Activated CD4-positive, alpha-beta memory T cell treated with anti-CD3 and anti-CD28 coated beads, Interleukin-2, amount 10 ng/mL, durations not matched to agents 7 days and 5 days (primary cell): ENCODE measurements at regions of chr14 and their contacts with region 1.

Region 1: DNA sequence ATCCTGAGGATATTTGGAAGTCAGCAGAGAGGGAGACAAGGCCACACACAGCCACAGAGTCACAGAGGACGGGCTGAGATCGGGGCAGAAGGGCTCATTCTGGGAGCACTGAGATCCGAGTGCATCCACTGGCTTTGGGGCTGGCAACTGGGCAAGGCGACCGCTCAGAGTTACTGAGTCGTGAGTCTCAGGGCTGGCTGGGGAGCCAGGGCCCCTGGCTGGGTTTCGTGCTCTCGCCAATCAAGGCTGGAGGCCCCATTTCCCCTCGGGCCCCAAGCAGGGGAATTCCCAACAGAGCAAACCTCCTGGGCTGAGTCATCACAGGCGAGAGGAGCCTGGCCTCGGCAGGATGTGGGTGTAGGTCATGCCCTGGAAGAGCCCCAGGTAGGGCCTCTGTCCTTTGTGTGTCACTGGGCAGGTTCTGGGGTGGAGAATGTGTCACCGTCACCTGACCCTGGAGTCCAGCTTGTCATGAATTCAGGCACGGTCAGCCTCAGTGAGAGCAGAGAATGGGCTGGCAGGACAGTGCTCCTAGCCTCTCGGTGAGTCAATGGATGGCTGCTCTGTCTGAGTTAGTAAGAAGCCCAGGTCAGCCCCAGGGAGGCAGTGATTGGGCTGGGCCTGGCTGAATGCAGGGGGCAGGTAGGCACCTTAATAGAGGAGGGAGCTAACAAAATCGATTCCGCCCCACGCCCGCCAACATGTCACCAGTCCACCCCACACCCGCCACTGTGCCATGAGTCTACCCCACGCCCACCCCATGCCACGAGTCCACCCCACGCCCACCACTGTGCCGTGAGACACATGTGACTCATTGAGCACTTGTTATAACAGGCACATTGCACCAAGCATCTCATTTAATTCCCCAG is 16.9 kb downstream of the ASB2 start:
- DNase-seq: peak; percentile 96
- H3K4me3 Mint-ChIP-seq: peak overlapping the region; percentile 75
- H3K27ac Mint-ChIP-seq: peak overlapping the region; percentile 99
- H3K4me1 Mint-ChIP-seq: peaks cover 96% of the 10 kb centered on the region
- H3K27me3 Mint-ChIP-seq: no peaks in the 10 kb centered on the region

Region 2: GRCh38 chr14:93903342-93904184 is 55.9 kb before region 1 on chr14:
- CTCF ChIA-PET with region 1: no interaction called
- POLR2A ChIA-PET with region 1: no interaction called
- DNase-seq: no peak
- H3K4me3 Mint-ChIP-seq: no peak overlapping the region
- H3K27ac Mint-ChIP-seq: no peak overlapping the region
- H3K4me1 Mint-ChIP-seq: peaks cover 3% of the 10 kb centered on the region
- H3K27me3 Mint-ChIP-seq: peaks cover 17% of the 10 kb centered on the region

Region 3: GRCh38 chr14:93926873-93927799 is 32.3 kb before region 1 on chr14 and contains the start of gene FAM181A:
- CTCF ChIA-PET with region 1: no interaction called
- POLR2A ChIA-PET with region 1: no interaction called
- DNase-seq: no peak
- H3K4me3 Mint-ChIP-seq: no peak within 1 kb of the TSS
- H3K27ac Mint-ChIP-seq: no peak within 1 kb of the TSS
- H3K4me1 Mint-ChIP-seq: no peaks in the 10 kb centered on the region
- H3K27me3 Mint-ChIP-seq: no peaks in the 10 kb centered on the region
- total RNA-seq, gene FAM181A: not detected

Region 4: DNA sequence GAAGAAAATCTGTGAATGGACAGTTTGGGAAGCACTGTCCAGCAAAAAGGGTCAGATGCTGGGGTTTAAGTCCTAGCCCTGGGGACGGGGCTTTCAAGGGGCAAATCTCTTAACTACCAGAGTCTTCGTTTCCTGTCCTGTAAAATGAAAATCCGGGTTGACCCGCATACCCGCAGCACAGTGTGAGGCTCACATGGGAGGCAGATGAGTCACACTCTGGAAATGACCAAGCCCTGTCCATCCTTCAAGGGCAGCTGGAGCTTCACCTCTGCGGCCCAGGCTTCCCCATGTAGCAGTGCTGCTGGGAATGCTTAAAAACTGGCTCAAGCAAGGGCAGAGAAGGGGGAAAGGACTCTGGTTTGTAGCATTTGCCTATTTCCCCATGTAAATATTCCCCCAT is 13.4 kb before region 1 on chr14:
- CTCF ChIA-PET with region 1: interaction called, 4 read pairs
- POLR2A ChIA-PET with region 1: interaction called, 39 read pairs
- DNase-seq: no peak
- H3K4me3 Mint-ChIP-seq: no peak overlapping the region
- H3K27ac Mint-ChIP-seq: peak overlapping the region; percentile 40
- H3K4me1 Mint-ChIP-seq: peaks cover 27% of the 10 kb centered on the region
- H3K27me3 Mint-ChIP-seq: no peaks in the 10 kb centered on the region

Region 5: DNA sequence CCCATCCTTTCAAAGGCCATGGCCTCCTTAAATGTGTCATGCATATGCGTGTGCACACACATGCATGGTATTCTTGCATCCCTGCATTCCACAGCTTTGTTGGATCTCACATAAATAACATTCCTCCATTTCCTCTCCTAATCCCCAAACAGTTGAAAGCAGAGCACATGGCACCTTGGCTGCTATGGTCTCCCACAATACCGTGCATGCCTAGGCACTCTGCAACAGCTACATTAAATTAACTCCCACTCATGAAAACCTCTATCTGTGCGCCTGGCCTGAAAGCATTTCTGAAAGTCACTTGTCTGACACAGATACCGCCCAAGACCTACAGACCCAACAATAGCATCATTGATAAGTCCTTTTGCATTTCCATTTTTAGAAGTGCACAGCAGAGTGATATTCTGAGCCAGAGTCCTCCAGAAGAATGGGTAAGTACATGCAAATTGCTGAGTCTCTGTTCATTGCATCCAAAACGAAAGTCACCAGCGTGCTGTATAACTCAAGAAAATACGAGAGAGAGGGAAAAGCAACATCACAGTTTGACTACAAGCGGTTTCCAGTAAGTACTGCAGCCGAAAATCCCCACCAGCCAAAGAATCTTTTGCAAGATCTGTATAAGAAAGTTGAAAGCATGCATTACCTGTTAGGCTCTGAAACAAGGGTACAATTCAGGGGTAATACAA is 16.5 kb after region 1 on chr14:
- CTCF ChIA-PET with region 1: interaction called, 156 read pairs
- POLR2A ChIA-PET with region 1: interaction called, 616 read pairs
- DNase-seq: peak; percentile 52
- H3K4me3 Mint-ChIP-seq: peak overlapping the region; percentile 78
- H3K27ac Mint-ChIP-seq: peak overlapping the region; percentile 97
- H3K4me1 Mint-ChIP-seq: peaks cover 89% of the 10 kb centered on the region
- H3K27me3 Mint-ChIP-seq: no peaks in the 10 kb centered on the region

Region 6: DNA sequence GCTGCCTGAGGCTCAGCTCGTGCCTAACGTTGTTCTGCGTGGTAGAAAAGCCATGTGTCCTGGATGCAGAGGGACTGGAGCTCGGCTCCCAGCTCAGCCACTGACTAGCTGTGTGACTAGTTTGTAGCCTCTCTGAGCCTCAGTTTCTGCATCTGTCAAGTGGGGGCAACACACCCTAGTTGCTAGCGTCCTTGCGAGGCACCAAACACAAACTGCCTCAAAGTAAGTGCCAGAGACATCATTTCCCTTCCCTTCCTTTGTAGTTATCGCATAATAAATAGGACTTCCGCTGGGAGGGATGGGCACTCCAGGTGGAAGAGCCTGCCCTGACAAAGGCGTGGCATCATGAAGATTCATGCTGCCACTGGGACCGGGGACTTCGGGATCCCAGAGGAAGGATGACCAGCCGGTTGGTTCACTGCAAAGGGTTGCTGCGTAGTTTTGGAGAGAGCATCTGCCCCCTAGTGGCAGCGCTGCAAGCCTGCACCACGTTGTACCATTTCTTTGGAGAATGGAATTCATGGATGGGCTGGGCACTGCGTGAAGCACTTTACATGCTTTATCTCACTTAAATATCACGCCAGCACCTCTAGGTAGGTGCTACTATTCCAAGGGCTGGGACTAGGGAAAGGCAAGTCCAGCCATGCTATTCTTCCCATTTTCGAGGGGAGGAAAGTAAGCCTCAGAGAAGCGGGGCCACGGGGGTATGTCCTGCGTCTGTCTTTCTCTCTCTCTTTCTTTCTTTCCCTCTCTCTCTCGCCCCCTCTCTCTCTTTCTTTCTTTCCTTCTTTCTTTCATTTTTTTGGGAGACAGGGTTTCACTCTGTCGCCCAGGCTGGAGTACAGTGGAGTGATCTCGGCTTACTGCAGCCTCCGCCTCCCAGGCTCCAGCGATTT is 42.3 kb after region 1 on chr14:
- CTCF ChIA-PET with region 1: interaction called, 8 read pairs
- POLR2A ChIA-PET with region 1: interaction called, 21 read pairs
- DNase-seq: peak; percentile 65
- H3K4me3 Mint-ChIP-seq: no peak overlapping the region
- H3K27ac Mint-ChIP-seq: peak overlapping the region; percentile 21
- H3K4me1 Mint-ChIP-seq: peaks cover 45% of the 10 kb centered on the region
- H3K27me3 Mint-ChIP-seq: peaks cover 6% of the 10 kb centered on the region

Region 7: DNA sequence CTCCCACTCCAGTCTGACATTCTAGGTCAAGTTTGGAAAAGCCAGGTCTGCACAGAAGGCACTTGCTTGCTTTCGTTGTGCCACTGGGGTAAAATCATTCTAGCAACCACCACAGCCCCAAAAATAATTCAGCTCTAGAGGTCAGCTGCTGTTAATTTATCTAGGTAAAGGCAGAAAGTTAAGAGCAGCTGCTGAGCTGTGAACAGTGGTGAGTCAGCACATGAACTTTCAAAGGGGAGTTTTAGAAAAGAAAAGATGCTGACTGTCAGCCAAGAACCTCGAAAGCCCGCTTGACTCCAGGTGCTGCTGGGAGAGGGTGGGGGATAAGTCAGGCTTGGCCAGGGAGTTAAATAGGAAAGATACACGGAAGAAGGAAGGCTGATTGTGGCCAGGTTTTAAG is 50.3 kb after region 1 on chr14:
- CTCF ChIA-PET with region 1: no interaction called
- POLR2A ChIA-PET with region 1: interaction called, 15 read pairs
- DNase-seq: no peak
- H3K4me3 Mint-ChIP-seq: no peak overlapping the region
- H3K27ac Mint-ChIP-seq: peak overlapping the region; percentile 61
- H3K4me1 Mint-ChIP-seq: peaks cover 69% of the 10 kb centered on the region
- H3K27me3 Mint-ChIP-seq: peaks cover 5% of the 10 kb centered on the region

Region 8: GRCh38 chr14:94080471-94081289 is 121.2 kb after region 1 on chr14 and contains the start of gene DDX24:
- CTCF ChIA-PET with region 1: no interaction called
- POLR2A ChIA-PET with region 1: interaction called, 17 read pairs
- DNase-seq: peak; percentile 98
- H3K4me3 Mint-ChIP-seq: peak within 1 kb of the TSS; percentile 98
- H3K27ac Mint-ChIP-seq: peak within 1 kb of the TSS; percentile 98
- H3K4me1 Mint-ChIP-seq: peaks cover 61% of the 10 kb centered on the region
- H3K27me3 Mint-ChIP-seq: no peaks in the 10 kb centered on the region
- total RNA-seq, gene DDX24: 210 to 216 TPM